ENCODE measurements at regions of chrX and their contacts with region 1.

Region 1: GRCh38 chrX:105307762-105308161 is 87.3 kb upstream of the TEX13A start:
- DNase-seq: no peak
- ATAC-seq: no peak

Region 2: GRCh38 chrX:105241056-105241455 is 66.7 kb before region 1 on chrX:
- intact Hi-C with region 1: no loop called
- DNase-seq: no peak
- ATAC-seq: no peak

Region 3: DNA sequence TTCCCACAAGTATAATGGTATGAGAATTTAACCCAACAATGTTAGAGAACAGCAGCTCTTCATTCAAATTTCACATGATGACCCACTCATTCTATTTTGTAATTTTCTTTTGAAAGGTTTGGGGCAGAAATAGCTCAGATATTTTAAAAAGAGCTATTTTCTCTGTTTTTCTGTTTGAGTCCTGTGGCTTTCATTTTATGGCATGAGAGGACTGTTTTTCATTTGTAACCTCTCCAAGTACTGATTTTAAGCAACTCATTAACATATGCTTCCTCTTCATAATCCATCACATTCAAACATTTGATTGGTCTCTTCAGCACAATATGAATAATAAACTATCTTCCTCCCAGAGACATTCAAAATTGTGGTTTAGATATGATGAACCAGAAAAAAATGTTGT is 41.7 kb after region 1 on chrX:
- intact Hi-C with region 1: loop called (anchors 1 kb)
- DNase-seq: no peak
- ATAC-seq: no peak

Region 4: DNA sequence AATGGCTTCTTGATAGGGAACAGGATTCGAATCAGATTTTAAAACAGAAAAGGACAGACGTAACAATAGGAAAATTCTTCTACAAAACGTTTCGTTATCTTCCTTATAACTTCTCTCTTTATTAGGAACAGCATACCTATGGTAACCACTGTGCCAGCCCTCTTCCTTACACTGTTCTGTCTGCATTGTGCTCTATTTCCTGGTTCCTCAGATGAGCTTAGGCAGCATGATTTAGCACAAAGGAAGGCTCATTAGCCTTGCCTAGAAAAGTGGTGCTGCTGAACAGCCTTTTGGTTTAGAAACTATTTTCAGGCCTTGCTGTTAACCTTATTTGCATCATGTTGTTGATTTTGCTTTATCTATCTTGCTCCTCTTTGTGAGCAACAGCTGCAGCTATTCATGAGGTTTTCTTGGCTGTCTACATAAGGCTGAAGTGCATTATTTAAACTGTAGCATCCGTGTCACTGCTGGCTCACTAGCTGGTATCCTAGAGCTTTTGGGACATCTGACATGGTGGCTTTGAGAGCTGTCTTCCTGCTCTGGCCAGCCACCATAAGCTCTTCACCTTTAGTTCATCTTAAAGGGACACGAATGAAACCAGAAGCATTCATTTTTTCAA is 444.7 kb after region 1 on chrX:
- intact Hi-C with region 1: no loop called
- DNase-seq: no peak
- ATAC-seq: no peak

Region 5: GRCh38 chrX:106378616-106379015 is 1070.9 kb after region 1 on chrX:
- intact Hi-C with region 1: no loop called
- DNase-seq: no peak
- ATAC-seq: no peak

Measured in sciatic nerve (tissue), 2 donors.